ENCODE measurements at regions of chr14 and their contacts with region 1.

Region 1: DNA sequence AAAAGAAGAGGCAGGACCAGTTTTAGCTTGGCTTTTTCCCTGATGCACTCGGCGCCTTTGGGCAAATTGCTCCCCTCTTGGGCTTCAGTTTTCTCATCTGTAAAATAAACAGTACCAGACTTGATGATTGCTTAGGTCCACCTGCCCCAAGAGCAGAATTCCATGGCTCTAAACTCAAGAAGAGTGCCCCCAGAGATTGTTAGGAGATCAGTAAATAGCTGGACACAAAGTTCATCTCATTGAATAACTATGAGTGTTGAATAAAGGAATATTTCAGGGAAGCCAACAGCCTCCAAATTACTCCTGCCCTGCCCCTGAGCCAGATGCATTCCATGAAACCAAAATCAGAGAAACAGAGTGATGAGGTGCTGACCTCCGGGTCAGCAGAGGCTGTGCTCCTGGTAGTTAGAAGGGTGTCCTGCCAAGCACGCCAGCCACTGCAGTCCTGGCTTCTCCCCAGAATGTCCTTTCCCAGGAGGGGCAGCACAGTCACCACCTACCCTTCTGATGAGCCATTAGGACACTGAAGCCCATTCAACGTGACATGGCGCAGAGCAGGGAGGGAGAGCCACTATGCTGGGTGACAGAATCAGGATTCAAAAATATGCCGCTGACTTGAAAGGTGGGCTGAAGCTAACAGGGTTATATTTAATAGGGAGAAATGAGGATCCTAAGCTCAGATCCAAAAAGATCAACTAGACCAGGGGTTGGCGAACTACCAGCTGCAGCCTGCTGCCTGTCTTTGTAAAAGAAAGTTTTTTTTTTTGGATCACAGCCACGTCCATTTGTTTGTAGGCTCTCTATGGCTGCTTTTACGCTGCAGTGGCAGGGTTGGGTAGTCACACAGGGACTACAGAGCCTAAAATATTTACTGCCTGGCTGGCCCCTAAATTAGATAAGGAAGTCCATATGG is 34.4 kb upstream of the PLEK2 start:
- DNase-seq: no peak
- H3K4me3 ChIP-seq: no peak overlapping the region
- H3K27ac ChIP-seq: no peak overlapping the region
- H3K27me3 ChIP-seq: peaks cover 11% of the 10 kb centered on the region
- CTCF ChIP-seq: no peak

Region 2: DNA sequence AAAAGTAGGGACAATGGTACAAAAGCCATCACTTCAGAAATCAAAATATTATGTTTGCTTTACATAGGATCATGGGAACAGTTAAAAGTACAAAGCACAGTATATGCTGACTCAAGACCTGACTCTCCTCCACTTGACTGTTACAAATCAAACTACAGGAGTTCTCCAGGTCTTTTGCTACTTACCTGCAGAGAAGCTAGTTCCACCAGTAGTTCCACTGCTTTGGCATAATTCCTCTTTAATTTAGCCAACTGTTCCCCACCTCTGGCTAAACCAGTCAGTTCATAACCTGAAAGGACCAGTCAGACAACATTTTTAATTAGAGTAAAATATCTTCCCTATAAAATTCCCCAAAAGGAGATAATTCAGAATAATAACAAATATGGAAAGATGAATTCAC is 100.8 kb before region 1 on chr14:
- CTCF ChIA-PET with region 1: no interaction called
- POLR2A ChIA-PET with region 1: no interaction called
- DNase-seq: no peak
- H3K4me3 ChIP-seq: no peak overlapping the region
- H3K27ac ChIP-seq: no peak overlapping the region
- H3K27me3 ChIP-seq: no peaks in the 10 kb centered on the region
- CTCF ChIP-seq: no peak

Region 3: GRCh38 chr14:67459336-67459735 is 13.0 kb after region 1 on chr14:
- CTCF ChIA-PET with region 1: interaction called, 3 read pairs
- POLR2A ChIA-PET with region 1: interaction called, 10 read pairs
- DNase-seq: no peak
- H3K4me3 ChIP-seq: no peak overlapping the region
- H3K27ac ChIP-seq: no peak overlapping the region
- H3K27me3 ChIP-seq: peaks cover 26% of the 10 kb centered on the region
- CTCF ChIP-seq: no peak